Gastrocnemius medialis (tissue), 4 donors: ENCODE measurements at regions of chr3 and their contacts with region 1.

Region 1: DNA sequence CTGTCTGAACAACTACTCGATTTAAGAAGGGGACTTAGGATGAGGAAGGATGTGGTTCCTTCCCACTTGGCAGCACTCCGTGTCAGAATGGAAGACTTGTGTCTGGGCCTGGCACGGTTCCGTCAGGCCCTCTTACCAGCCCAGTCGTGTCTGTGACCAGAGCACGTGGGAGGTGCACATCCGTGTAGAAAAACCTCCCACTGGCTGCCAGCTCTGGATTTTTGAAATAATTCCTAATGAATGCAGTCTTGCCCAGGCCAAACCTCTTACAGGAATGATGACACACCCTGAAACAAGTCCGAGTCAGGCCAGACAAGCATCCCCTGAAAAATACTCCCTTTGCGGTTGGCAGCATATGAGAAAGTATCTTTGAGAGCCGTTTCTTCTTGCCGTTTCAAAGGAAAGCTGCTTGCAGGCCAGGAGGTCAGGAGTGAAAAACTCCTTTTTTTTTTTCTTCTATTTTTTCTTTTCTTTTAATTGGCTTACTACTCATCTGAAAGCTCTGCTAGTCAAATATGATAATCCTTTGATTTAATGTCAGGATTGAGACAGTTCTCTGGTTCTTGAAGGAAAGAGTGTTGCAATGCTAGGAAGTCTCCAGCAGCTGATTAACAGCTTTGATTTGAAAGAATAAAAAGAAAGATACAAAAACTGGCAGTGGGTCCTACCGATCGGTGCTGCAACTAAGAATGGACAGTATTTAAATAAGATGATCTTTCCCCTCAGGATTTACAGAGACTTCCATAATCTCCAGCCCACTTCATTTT is 19.8 kb downstream of the IL1RAP start:
- DNase-seq: peak; percentile 8 to 45
- ATAC-seq: peak; percentile 62 to 73
- H3K4me3 ChIP-seq: no peak overlapping the region
- H3K27ac ChIP-seq: peak overlapping the region in 1 of 4 donors; percentile 43
- H3K4me1 ChIP-seq: peaks cover 7 to 9% of the 10 kb centered on the region in 2 donors
- H3K27me3 ChIP-seq: no peaks in the 10 kb centered on the region
- CTCF ChIP-seq: no peak
- POLR2A ChIP-seq: no peak

Region 2: GRCh38 chr3:190359813-190360212 is 173.9 kb before region 1 on chr3:
- in situ Hi-C with region 1: no loop called
- intact Hi-C with region 1: no loop called
- DNase-seq: no peak
- ATAC-seq: no peak
- H3K4me3 ChIP-seq: no peak overlapping the region
- H3K27ac ChIP-seq: no peak overlapping the region
- H3K4me1 ChIP-seq: no peaks in the 10 kb centered on the region
- H3K27me3 ChIP-seq: no peaks in the 10 kb centered on the region
- CTCF ChIP-seq: no peak
- POLR2A ChIP-seq: no peak

Region 3: DNA sequence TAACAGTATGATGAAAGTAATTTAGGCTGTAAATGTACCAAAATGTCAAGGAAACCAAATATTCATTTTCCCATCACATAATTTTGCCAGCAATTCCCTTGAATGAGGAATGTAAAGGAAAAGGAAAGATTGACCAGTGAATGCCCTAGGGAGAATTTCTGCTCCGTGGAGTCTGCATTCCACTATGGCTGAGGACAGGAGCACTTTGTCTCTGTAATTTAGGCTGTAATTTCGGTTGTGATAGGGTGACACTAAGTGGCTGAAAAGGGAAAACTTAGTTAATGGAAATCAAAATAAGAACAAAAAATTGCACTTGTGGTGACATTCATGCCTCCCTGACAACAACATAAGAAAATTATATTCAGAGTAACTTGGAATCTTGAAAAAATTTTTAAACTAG is 75.7 kb before region 1 on chr3:
- in situ Hi-C with region 1: no loop called
- intact Hi-C with region 1: no loop called
- DNase-seq: no peak
- ATAC-seq: no peak
- H3K4me3 ChIP-seq: no peak overlapping the region
- H3K27ac ChIP-seq: no peak overlapping the region
- H3K4me1 ChIP-seq: no peaks in the 10 kb centered on the region
- H3K27me3 ChIP-seq: no peaks in the 10 kb centered on the region
- CTCF ChIP-seq: no peak
- POLR2A ChIP-seq: no peak

Region 4: DNA sequence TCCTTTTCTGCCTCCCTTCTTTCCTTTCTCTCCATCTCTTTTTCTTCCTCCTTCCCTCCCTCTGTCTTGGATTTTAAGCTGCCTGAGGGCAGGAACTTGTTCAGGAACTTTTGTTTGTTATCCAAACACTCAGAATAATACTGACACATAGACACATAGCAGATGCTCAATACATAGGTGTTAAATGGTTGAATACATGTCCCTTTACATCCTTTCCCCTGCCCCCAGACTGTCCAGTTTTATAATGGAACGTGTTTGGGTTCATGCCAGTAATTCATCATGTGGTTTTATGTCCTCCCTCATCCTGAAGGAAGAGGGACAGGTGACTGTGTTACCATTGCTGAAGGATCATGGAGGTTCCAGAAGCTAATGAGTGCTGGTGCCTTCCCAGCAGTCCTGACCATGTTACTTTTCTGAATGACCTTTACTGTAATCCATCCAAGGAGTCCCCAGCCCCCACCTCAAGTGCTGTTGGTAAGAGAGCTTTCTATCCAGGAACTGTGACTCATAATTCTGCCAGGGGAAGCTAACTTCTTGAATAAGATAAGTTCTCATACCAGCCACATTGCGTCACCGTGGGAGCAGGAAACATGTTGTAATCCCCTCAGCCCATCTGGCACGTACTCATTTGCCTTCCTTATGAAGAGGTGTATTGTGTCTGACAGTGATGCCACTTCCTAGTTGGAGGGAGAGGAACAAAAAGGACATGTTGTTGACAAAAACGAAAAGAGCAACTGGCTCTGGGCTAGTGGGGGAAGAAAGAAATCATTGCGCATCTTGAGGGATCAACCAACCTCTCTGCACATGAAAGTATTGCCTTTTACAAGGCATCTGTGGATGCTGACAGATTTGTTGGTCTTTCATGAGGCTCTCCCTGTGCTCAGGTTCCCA is 32.6 kb after region 1 on chr3:
- in situ Hi-C with region 1: no loop called
- intact Hi-C with region 1: loop called (anchors 1 kb)
- DNase-seq: peak; percentile 54 to 85
- ATAC-seq: peak; percentile 92 to 94
- H3K4me3 ChIP-seq: no peak overlapping the region
- H3K27ac ChIP-seq: peak overlapping the region in 2 of 4 donors; percentile 29 to 62
- H3K4me1 ChIP-seq: peaks cover 4 to 7% of the 10 kb centered on the region in 2 donors
- H3K27me3 ChIP-seq: no peaks in the 10 kb centered on the region
- CTCF ChIP-seq: no peak
- POLR2A ChIP-seq: no peak

Region 5: DNA sequence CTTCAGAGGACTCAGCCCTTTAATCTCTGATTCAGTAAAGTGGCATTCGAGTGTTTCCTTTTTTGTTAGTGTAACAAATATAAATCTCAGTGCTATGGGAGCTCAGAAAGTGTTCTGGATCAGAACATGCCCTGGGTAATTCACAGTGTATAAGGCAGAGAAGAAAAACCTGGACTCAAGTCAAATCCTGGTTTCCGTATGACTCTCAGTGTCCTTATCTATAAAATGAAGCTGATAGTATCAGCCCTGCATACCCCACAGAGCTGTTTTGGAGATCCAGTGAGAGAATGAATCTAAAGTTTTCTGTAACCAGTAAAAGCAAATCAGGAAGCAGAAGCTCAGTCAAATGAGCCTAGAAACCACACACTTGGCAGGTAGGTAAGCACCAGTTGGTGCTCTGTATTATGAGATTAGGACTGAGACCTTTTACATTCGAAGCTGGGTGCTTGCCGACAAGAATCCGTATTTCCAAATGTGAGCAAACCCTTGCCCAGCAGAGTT is 47.4 kb after region 1 on chr3:
- in situ Hi-C with region 1: no loop called
- intact Hi-C with region 1: no loop called
- DNase-seq: no peak
- ATAC-seq: no peak
- H3K4me3 ChIP-seq: no peak overlapping the region
- H3K27ac ChIP-seq: no peak overlapping the region
- H3K4me1 ChIP-seq: peaks cover 0 to 3% of the 10 kb centered on the region in 2 donors
- H3K27me3 ChIP-seq: no peaks in the 10 kb centered on the region
- CTCF ChIP-seq: no peak
- POLR2A ChIP-seq: no peak